T-cell (primary cell): ENCODE measurements at regions of chr5 and their contacts with region 1.

Region 1: GRCh38 chr5:32613050-32613672 is 27.8 kb downstream of the SUB1 start:
- DNase-seq: peak; percentile 49 to 89 (median 78)
- ATAC-seq: peak; percentile 67 to 75 (median 72)
- H3K4me3 ChIP-seq: no peak overlapping the region
- H3K4me3 Mint-ChIP-seq: no peak overlapping the region
- H3K27ac ChIP-seq: no peak overlapping the region
- H3K27ac Mint-ChIP-seq: no peak overlapping the region
- H3K4me1 ChIP-seq: no peaks in the 10 kb centered on the region
- H3K4me1 Mint-ChIP-seq: peaks cover 7 to 11% (median 8%) of the 10 kb centered on the region in 3 donors
- H3K27me3 ChIP-seq: no peaks in the 10 kb centered on the region
- H3K27me3 Mint-ChIP-seq: no peaks in the 10 kb centered on the region

Region 2: GRCh38 chr5:32489791-32490582 is 123.2 kb before region 1 on chr5:
- CTCF ChIA-PET with region 1: interaction called, 8 to 28 read pairs
- POLR2A ChIA-PET with region 1: interaction called in 1 of 2 experiments, 3 read pairs
- DNase-seq: peak; percentile 20 to 82 (median 58)
- ATAC-seq: peak in 2 of 4 experiments; percentile 53 to 63
- H3K4me3 ChIP-seq: no peak overlapping the region
- H3K4me3 Mint-ChIP-seq: no peak overlapping the region
- H3K27ac ChIP-seq: no peak overlapping the region
- H3K27ac Mint-ChIP-seq: no peak overlapping the region
- H3K4me1 ChIP-seq: peaks cover 0 to 4% of the 10 kb centered on the region in 2 experiments
- H3K4me1 Mint-ChIP-seq: peaks cover 0 to 6% (median 0%) of the 10 kb centered on the region in 3 donors
- H3K27me3 ChIP-seq: no peaks in the 10 kb centered on the region
- H3K27me3 Mint-ChIP-seq: no peaks in the 10 kb centered on the region

Region 3: GRCh38 chr5:32880796-32881195 is 267.6 kb after region 1 on chr5:
- CTCF ChIA-PET with region 1: no interaction called
- POLR2A ChIA-PET with region 1: no interaction called
- DNase-seq: no peak
- ATAC-seq: no peak
- H3K4me3 ChIP-seq: no peak overlapping the region
- H3K4me3 Mint-ChIP-seq: no peak overlapping the region
- H3K27ac ChIP-seq: no peak overlapping the region
- H3K27ac Mint-ChIP-seq: no peak overlapping the region
- H3K4me1 ChIP-seq: no peaks in the 10 kb centered on the region
- H3K4me1 Mint-ChIP-seq: no peaks in the 10 kb centered on the region
- H3K27me3 ChIP-seq: no peaks in the 10 kb centered on the region
- H3K27me3 Mint-ChIP-seq: no peaks in the 10 kb centered on the region